ENCODE measurements at regions of chr7 and their contacts with region 1.

Region 1: GRCh38 chr7:145036604-145037405 is 201.0 kb upstream of the TPK1 start:
- DNase-seq: peak; percentile 25
- H3K4me3 ChIP-seq: no peak overlapping the region
- H3K27ac ChIP-seq: no peak overlapping the region
- H3K4me1 ChIP-seq: no peaks in the 10 kb centered on the region
- H3K27me3 ChIP-seq: no peaks in the 10 kb centered on the region
- CTCF ChIP-seq: peak; percentile 74 to 80

Region 2: DNA sequence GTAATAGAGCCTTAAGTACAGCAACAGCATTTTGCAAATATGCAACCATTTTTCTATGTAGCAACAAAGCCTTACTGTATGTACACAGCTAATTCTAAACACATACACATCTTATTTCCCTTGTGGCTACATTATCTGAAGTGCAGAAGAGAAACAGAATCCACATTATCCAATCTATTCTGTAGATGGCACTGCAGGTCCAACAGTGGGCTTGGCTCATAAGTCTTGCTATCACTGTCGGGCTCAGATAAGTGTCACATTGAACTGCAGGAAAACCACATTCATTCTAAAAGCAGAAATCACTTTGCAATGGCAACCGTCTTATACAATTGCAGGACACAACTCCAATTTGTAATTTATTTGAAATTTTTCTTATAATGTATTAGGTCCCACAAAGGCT is 523.5 kb before region 1 on chr7:
- CTCF ChIA-PET with region 1: no interaction called
- dilution Hi-C with region 1: no loop called
- in situ Hi-C with region 1: no loop called
- intact Hi-C with region 1: loop called (anchors 5 kb)
- DNase-seq: no peak
- H3K4me3 ChIP-seq: no peak overlapping the region
- H3K27ac ChIP-seq: no peak overlapping the region
- H3K4me1 ChIP-seq: no peaks in the 10 kb centered on the region
- H3K27me3 ChIP-seq: no peaks in the 10 kb centered on the region
- CTCF ChIP-seq: peak; percentile 14 to 40

Region 3: DNA sequence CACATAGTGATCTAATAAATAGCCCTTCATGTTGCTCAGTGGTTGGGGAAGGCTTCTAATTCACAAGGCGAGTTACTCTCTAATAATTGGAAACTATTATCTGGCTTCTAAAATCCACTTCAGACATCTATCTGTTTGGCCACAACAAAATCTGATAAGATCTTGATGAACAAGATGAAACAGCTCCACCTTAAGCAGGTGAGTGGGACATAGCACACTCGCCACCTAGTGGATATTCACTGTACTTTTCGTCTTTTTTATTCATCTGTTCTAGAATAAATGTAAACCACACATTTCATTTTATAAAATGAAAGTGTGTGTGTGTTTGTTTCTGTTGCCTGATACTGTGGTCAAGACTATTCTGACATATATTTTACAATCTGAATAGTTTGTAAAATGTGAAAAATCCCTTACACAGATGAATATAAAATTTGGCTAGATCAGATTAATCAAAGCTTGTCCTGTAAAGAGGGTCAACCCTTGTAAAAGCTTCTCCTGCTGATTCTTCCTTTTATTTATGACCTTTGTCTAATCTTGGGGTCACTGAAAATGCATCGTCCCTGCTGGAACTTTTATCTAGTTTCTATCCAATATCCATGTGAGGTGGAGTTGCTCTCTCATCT is 1053.3 kb after region 1 on chr7:
- CTCF ChIA-PET with region 1: no interaction called
- dilution Hi-C with region 1: no loop called
- in situ Hi-C with region 1: loop called (anchors 25 kb)
- intact Hi-C with region 1: loop called (anchors 1 kb)
- DNase-seq: peak; percentile 20
- H3K4me3 ChIP-seq: no peak overlapping the region
- H3K27ac ChIP-seq: no peak overlapping the region
- H3K4me1 ChIP-seq: no peaks in the 10 kb centered on the region
- H3K27me3 ChIP-seq: no peaks in the 10 kb centered on the region
- CTCF ChIP-seq: peak; percentile 58 to 78